ENCODE measurements at regions of chr13 and their contacts with region 1.

Region 1: GRCh38 chr13:36818804-36819738 is at the start of gene RFXAP:
- DNase-seq: peak; percentile 94
- H3K4me3 ChIP-seq: peak within 1 kb of the TSS; percentile 78 to 91 (median 86)
- H3K27ac ChIP-seq: peak within 1 kb of the TSS; percentile 70 to 83 (median 81)
- H3K4me1 ChIP-seq: peaks cover 0 to 35% (median 24%) of the 10 kb centered on the region in 4 donors
- H3K27me3 ChIP-seq: no peaks in the 10 kb centered on the region
- CTCF ChIP-seq: no peak
- EP300 ChIP-seq: no peak
- POLR2A ChIP-seq: peak in 1 of 2 donors; percentile 36
- total RNA-seq, gene RFXAP: 5.4 to 8.3 (median 7.9) TPM

Region 2: GRCh38 chr13:36919833-36920615 is 101.0 kb after region 1 on chr13 and contains the start of gene SMAD9:
- intact Hi-C with region 1: loop called (anchors 5 kb)
- DNase-seq: peak; percentile 91
- H3K4me3 ChIP-seq: peak within 1 kb of the TSS; percentile 51 to 73 (median 68)
- H3K27ac ChIP-seq: peak within 1 kb of the TSS; percentile 81 to 89 (median 89)
- H3K4me1 ChIP-seq: peaks cover 0 to 47% (median 34%) of the 10 kb centered on the region in 4 donors
- H3K27me3 ChIP-seq: no peaks in the 10 kb centered on the region
- CTCF ChIP-seq: no peak
- EP300 ChIP-seq: no peak
- POLR2A ChIP-seq: no peak
- total RNA-seq, gene SMAD9: 21.7 to 33.3 (median 27.8) TPM

Region 3: DNA sequence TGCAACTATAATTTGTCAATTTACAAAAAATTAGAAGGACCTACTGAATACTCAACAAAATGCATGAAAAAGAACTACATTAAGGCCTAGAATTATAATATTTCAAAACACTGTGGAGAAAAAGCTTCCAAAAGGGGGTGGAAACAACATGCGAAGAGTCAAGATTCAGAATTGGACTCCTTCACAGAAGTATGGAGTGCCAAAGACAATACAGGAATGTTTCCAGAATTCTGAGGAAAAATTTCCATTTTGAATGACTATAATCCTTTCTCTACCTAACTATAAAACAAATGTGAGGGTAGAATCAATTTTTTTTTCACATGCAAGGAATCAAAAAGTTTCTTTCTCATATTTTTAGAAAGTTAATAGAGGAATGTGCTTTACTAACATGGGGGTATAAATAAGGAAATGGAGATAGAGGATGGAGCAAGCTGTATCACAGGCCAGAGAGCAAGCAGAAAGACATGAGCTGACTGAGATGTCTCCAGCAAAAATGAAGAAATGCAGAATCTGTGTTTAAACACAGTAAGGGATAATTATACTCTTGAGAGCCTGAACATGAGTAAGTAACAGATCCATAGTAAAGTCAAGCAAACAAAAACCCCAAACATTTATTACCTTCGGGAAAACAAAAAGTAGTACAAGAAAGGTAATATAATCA is 140.5 kb after region 1 on chr13:
- intact Hi-C with region 1: no loop called
- DNase-seq: no peak
- H3K4me3 ChIP-seq: no peak overlapping the region
- H3K27ac ChIP-seq: no peak overlapping the region
- H3K4me1 ChIP-seq: no peaks in the 10 kb centered on the region
- H3K27me3 ChIP-seq: no peaks in the 10 kb centered on the region
- CTCF ChIP-seq: no peak
- EP300 ChIP-seq: no peak
- POLR2A ChIP-seq: no peak

Measured in sigmoid colon (tissue), 7 donors.